ENCODE measurements at regions of chr3 and their contacts with region 1.

Region 1: DNA sequence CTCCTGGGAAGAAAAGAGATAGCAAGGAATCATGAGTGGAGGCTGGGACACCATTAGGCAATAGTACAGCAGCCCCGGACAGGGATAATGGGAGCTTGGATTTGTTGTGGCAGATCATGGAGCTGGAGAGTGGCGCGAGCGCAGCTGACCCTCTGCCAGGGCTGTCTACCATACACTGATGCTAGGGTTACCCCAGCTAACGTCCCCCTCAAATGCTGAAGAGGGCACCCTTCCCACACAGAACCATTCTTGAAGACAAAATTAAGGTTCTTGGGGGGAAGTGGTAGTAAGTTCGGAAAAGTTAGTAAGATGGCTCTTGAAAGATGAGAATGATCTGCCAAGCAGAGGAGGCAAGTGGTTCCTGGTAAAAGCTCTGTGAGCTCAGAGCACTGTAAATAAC is 61.1 kb downstream of the ST3GAL6 start:
- DNase-seq: no peak
- ATAC-seq: peak; percentile 55; the same call in 2 of the 3 replicates
- H3K4me3 ChIP-seq: no peak overlapping the region
- H3K27ac ChIP-seq: no peak overlapping the region
- H3K4me1 ChIP-seq: no peaks in the 10 kb centered on the region
- H3K27me3 ChIP-seq: no peaks in the 10 kb centered on the region
- CTCF ChIP-seq: peak; percentile 6 to 35 (median 30); a peak in 4 of 6 replicates
- EP300 ChIP-seq: no peak
- POLR2A ChIP-seq: no peak
- RAD21 ChIP-seq: peak; percentile 60

Region 2: GRCh38 chr3:98901392-98902350 is 77.4 kb after region 1 on chr3 and contains the start of gene DCBLD2:
- CTCF ChIA-PET with region 1: no interaction called
- POLR2A ChIA-PET with region 1: no interaction called
- RAD21 ChIA-PET with region 1: no interaction called
- SMC1A ChIA-PET with region 1: no interaction called
- in situ Hi-C with region 1: no loop called
- intact Hi-C with region 1: loop called (anchors 5 kb)
- DNase-seq: peak; percentile 94
- ATAC-seq: peak; percentile 99
- H3K4me3 ChIP-seq: peak within 1 kb of the TSS; percentile 81
- H3K27ac ChIP-seq: peak within 1 kb of the TSS; percentile 91
- H3K4me1 ChIP-seq: no peaks in the 10 kb centered on the region
- H3K27me3 ChIP-seq: no peaks in the 10 kb centered on the region
- CTCF ChIP-seq: no peak
- EP300 ChIP-seq: no peak
- POLR2A ChIP-seq: peak; percentile 89
- RAD21 ChIP-seq: no peak
- polyA plus RNA-seq, gene DCBLD2: 1.6 to 2.6 TPM

Region 3: DNA sequence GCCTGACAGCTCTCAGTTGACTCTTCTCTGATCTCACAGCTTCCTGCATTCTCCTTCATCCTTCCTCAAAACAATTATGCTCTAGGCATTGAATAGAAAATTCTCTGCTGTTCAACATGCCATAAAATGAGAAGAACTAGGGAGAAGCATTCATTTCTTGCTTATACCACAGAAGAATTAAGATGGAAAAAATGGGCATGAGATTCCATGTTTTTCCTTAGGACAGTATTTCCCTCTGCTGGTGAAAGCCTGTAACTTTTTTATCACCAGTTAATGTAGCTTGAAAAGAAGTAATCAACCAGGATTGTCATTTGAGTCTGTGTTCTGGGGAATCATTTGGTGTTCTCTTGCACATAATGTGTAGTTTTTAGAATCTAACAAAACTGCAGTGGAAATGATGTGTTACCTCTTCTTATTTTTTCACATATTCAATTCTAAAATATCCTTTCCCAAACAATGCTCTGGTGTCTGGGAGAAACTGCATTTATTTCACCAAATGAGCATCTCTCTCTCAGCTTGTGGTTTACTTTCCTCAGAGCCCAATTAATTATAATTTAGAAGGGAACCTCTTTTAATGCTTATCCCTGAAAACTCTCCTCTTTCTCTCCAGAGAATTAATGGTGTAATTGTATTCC is 170.0 kb after region 1 on chr3:
- CTCF ChIA-PET with region 1: interaction called, 29 read pairs
- POLR2A ChIA-PET with region 1: no interaction called
- RAD21 ChIA-PET with region 1: interaction called, 7 read pairs
- SMC1A ChIA-PET with region 1: interaction called, 7 read pairs
- in situ Hi-C with region 1: loop called (anchors 5 kb)
- intact Hi-C with region 1: no loop called
- DNase-seq: no peak
- ATAC-seq: no peak
- H3K4me3 ChIP-seq: no peak overlapping the region
- H3K27ac ChIP-seq: no peak overlapping the region
- H3K4me1 ChIP-seq: no peaks in the 10 kb centered on the region
- H3K27me3 ChIP-seq: no peaks in the 10 kb centered on the region; a peak in 1 of 4 replicates
- CTCF ChIP-seq: peak; percentile 36 to 54 (median 47); a peak in 5 of 6 replicates
- EP300 ChIP-seq: no peak
- POLR2A ChIP-seq: no peak
- RAD21 ChIP-seq: peak; percentile 60

Region 4: DNA sequence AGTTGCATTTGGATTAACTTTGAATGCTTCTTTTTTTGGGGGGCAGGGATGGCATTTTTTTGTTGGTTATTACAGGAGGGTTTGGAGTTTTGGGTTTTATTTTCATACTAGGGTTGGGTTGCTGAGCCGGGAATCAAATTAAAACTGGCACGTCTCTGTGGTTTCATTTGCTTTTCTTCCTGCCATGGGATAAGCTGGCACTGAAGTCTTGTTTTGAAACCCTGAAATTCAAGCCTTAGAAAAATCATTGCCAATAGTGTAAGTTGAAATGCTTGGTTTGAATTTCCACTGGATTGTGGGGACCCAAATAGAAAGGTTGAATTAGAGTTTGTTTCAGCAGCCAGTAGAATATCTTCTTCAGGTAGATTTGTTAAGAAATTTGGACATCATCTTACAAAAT is 270.4 kb after region 1 on chr3:
- CTCF ChIA-PET with region 1: no interaction called
- POLR2A ChIA-PET with region 1: no interaction called
- RAD21 ChIA-PET with region 1: no interaction called
- SMC1A ChIA-PET with region 1: interaction called, 3 read pairs
- in situ Hi-C with region 1: no loop called
- intact Hi-C with region 1: loop called (anchors 5 kb)
- DNase-seq: no peak
- ATAC-seq: no peak
- H3K4me3 ChIP-seq: no peak overlapping the region
- H3K27ac ChIP-seq: no peak overlapping the region
- H3K4me1 ChIP-seq: no peaks in the 10 kb centered on the region
- H3K27me3 ChIP-seq: no peaks in the 10 kb centered on the region
- CTCF ChIP-seq: no peak
- EP300 ChIP-seq: no peak
- POLR2A ChIP-seq: no peak
- RAD21 ChIP-seq: no peak

Region 5: DNA sequence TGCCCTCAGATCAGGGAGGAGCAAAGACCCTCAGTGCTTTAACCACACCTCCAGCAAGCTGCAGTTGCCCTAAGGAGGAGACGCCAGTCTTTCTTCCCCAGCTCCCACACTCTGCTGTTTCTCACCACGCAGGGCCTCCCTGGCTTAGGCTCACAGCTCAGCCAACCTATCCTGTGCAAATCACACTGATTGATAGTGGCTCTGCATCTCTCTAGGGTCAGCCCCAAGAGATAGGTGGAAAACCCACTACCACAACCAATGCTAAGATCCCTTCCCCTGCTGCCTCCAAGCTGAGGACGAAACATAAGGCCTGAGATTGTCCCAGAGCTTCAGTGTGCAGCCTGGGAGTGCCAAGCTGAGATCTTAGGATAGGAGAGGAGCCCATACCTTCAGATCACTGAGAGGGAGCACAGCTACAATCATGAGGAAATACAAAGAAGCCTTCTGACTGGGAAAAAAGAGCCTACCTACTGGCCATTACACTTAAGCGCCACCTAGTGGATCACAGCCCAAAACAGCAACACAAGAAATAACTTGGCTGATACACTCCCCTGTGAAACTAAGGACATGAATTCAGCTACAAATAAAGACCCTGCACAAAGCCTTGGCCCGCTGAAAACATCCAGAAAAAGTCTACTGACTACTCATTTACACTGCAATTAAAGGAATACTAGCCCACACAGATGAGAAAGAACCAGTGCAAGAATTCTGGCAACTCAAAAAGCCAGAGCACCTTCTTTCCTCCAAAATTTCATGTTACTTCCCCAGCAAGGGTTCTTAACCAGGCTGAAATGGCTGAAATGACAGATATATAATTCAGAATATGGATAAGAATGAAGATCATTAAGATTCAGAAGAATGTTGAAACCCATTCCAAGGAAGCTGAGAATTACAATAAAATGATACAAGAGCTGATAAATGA is 348.7 kb after region 1 on chr3:
- CTCF ChIA-PET with region 1: interaction called, 20 read pairs
- POLR2A ChIA-PET with region 1: no interaction called
- RAD21 ChIA-PET with region 1: no interaction called
- SMC1A ChIA-PET with region 1: interaction called, 8 read pairs
- in situ Hi-C with region 1: loop called (anchors 5 kb)
- intact Hi-C with region 1: no loop called
- DNase-seq: peak; percentile 9
- ATAC-seq: peak; percentile 88
- H3K4me3 ChIP-seq: no peak overlapping the region
- H3K27ac ChIP-seq: no peak overlapping the region
- H3K4me1 ChIP-seq: no peaks in the 10 kb centered on the region
- H3K27me3 ChIP-seq: no peaks in the 10 kb centered on the region
- CTCF ChIP-seq: peak; percentile 65 to 73 (median 68)
- EP300 ChIP-seq: no peak
- POLR2A ChIP-seq: no peak
- RAD21 ChIP-seq: peak; percentile 73

Region 6: DNA sequence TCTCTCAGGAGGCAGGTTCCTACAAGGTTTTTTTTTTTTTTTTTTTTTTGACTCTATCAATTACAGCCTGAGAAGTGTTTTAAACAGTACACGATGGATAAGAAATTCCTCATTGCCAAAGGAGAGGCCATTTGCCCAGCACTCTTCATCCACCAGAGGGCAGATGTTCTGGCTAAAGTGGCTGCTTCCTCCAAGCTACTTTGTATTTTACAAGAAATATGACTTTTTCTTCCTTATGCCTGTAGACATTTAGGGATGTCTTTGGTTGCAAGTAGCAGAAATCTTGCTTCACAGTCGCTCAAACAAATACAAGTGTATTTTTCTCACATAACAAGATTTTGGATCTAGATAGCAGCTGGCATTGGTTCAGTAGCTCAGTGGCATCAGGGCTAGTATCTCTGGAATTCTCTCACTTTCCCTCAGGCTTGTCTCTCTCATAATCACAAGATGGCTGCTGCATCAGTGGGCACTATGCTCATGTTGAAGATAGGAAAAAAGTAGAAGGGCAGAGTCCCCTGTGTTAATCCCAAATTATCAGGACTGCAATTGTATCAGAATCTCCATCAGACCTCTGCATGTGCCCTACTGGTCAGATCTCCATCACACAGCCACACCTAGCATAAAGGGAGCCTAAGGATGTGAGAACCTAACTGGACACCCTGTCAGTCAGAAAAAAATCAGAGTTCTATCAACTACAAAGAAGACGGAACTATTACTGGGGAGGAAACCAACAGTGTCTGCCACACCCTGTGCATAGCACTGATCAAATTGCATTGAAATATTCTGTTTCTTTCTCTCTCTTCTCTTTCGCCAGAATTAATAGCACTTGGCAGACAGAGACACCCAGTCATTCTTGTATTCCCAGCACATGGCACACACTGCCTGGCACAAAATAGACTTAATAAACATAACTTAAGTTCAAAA is 675.2 kb after region 1 on chr3:
- CTCF ChIA-PET with region 1: no interaction called
- POLR2A ChIA-PET with region 1: no interaction called
- RAD21 ChIA-PET with region 1: no interaction called
- SMC1A ChIA-PET with region 1: no interaction called
- in situ Hi-C with region 1: no loop called
- intact Hi-C with region 1: loop called (anchors 10 kb)
- DNase-seq: peak; percentile 16
- ATAC-seq: peak; percentile 87
- H3K4me3 ChIP-seq: no peak overlapping the region
- H3K27ac ChIP-seq: no peak overlapping the region
- H3K4me1 ChIP-seq: no peaks in the 10 kb centered on the region
- H3K27me3 ChIP-seq: no peaks in the 10 kb centered on the region
- CTCF ChIP-seq: peak; percentile 73 to 74 (median 74)
- EP300 ChIP-seq: no peak
- POLR2A ChIP-seq: no peak
- RAD21 ChIP-seq: peak; percentile 75

Region 7: GRCh38 chr3:99753268-99753975 is 929.2 kb after region 1 on chr3:
- CTCF ChIA-PET with region 1: interaction called, 3 read pairs
- POLR2A ChIA-PET with region 1: no interaction called
- RAD21 ChIA-PET with region 1: no interaction called
- SMC1A ChIA-PET with region 1: no interaction called
- in situ Hi-C with region 1: loop called (anchors 5 kb)
- intact Hi-C with region 1: loop called (anchors 5 kb)
- DNase-seq: peak; percentile 40
- ATAC-seq: peak; percentile 87
- H3K4me3 ChIP-seq: no peak overlapping the region
- H3K27ac ChIP-seq: no peak overlapping the region
- H3K4me1 ChIP-seq: no peaks in the 10 kb centered on the region
- H3K27me3 ChIP-seq: no peaks in the 10 kb centered on the region
- CTCF ChIP-seq: peak; percentile 65 to 80 (median 71); a peak in 5 of 6 replicates
- EP300 ChIP-seq: no peak
- POLR2A ChIP-seq: no peak
- RAD21 ChIP-seq: peak; percentile 91